Psoas muscle (tissue), 8 donors: ENCODE measurements at regions of chr17 and their contacts with region 1.

Region 1: GRCh38 chr17:80791758-80792284 is 199.8 kb upstream of the CHMP6 start:
- DNase-seq: peak; percentile 81 to 88
- ATAC-seq: peak; percentile 59 to 80 (median 74)
- H3K4me3 ChIP-seq: peak overlapping the region; percentile 27
- H3K27ac ChIP-seq: peak overlapping the region; percentile 62
- H3K4me1 ChIP-seq: peaks cover 58% of the 10 kb centered on the region
- H3K27me3 ChIP-seq: no peaks in the 10 kb centered on the region
- CTCF ChIP-seq: no peak

Region 2: GRCh38 chr17:80751070-80751945 is 40.5 kb before region 1 on chr17:
- intact Hi-C with region 1: loop called in 1 of 2 experiments (anchors 5 kb)
- DNase-seq: peak; percentile 75 to 94
- ATAC-seq: peak; percentile 88 to 90 (median 90)
- H3K4me3 ChIP-seq: peak overlapping the region; percentile 59
- H3K27ac ChIP-seq: peak overlapping the region; percentile 98
- H3K4me1 ChIP-seq: peaks cover 30% of the 10 kb centered on the region
- H3K27me3 ChIP-seq: no peaks in the 10 kb centered on the region
- CTCF ChIP-seq: no peak

Region 3: GRCh38 chr17:80832888-80833583 is 41.2 kb after region 1 on chr17:
- intact Hi-C with region 1: loop called in 1 of 2 experiments (anchors 5 kb)
- DNase-seq: peak; percentile 92
- ATAC-seq: peak; percentile 92 to 93 (median 92)
- H3K4me3 ChIP-seq: peak overlapping the region; percentile 62
- H3K27ac ChIP-seq: peak overlapping the region; percentile 93
- H3K4me1 ChIP-seq: peaks cover 39% of the 10 kb centered on the region
- H3K27me3 ChIP-seq: no peaks in the 10 kb centered on the region
- CTCF ChIP-seq: no peak